ENCODE measurements at regions of chr3 and their contacts with region 1.

Region 1: GRCh38 chr3:187623285-187623814 is 46.8 kb downstream of the SST start:
- DNase-seq: no peak
- H3K4me3 ChIP-seq: no peak overlapping the region
- H3K4me3 Mint-ChIP-seq: no peak overlapping the region
- H3K27ac ChIP-seq: no peak overlapping the region
- H3K27ac Mint-ChIP-seq: no peak overlapping the region
- H3K4me1 ChIP-seq: no peaks in the 10 kb centered on the region
- H3K4me1 Mint-ChIP-seq: no peaks in the 10 kb centered on the region
- H3K27me3 ChIP-seq: peaks cover 0 to 5% of the 10 kb centered on the region in 2 donors
- H3K27me3 Mint-ChIP-seq: peaks cover 3 to 20% (median 8%) of the 10 kb centered on the region in 3 donors
- CTCF ChIP-seq: no peak

Region 2: GRCh38 chr3:187679638-187680396 is 56.5 kb after region 1 on chr3:
- intact Hi-C with region 1: loop called in 1 of 2 experiments (anchors 5 kb)
- DNase-seq: peak; percentile 36 to 57 (median 52)
- H3K4me3 ChIP-seq: no peak overlapping the region
- H3K4me3 Mint-ChIP-seq: no peak overlapping the region
- H3K27ac ChIP-seq: no peak overlapping the region
- H3K27ac Mint-ChIP-seq: no peak overlapping the region
- H3K4me1 ChIP-seq: no peaks in the 10 kb centered on the region
- H3K4me1 Mint-ChIP-seq: peaks cover 2% of the 10 kb centered on the region
- H3K27me3 ChIP-seq: peaks cover 0 to 9% of the 10 kb centered on the region in 2 donors
- H3K27me3 Mint-ChIP-seq: peaks cover 2 to 18% (median 11%) of the 10 kb centered on the region in 3 donors
- CTCF ChIP-seq: peak; percentile 94

Measured in CD14-positive monocyte (primary cell).